Activated CD4-positive, alpha-beta memory T cell treated with anti-CD3 and anti-CD28 coated beads, Interleukin-2, amount 10 ng/mL, durations not matched to agents 7 days and 5 days (primary cell): ENCODE measurements at regions of chr1 and their contacts with region 1.

Region 1: GRCh38 chr1:205591522-205592351 is 40.1 kb downstream of the ELK4 start:
- DNase-seq: peak; percentile 89
- H3K4me3 Mint-ChIP-seq: peak overlapping the region; percentile 74
- H3K27ac Mint-ChIP-seq: peak overlapping the region; percentile 64
- H3K4me1 Mint-ChIP-seq: peaks cover 44% of the 10 kb centered on the region
- H3K27me3 Mint-ChIP-seq: no peaks in the 10 kb centered on the region

Region 2: GRCh38 chr1:205610036-205610435 is 18.3 kb after region 1 on chr1:
- CTCF ChIA-PET with region 1: interaction called, 17 read pairs
- POLR2A ChIA-PET with region 1: interaction called, 6 read pairs
- DNase-seq: no peak
- H3K4me3 Mint-ChIP-seq: no peak overlapping the region
- H3K27ac Mint-ChIP-seq: no peak overlapping the region
- H3K4me1 Mint-ChIP-seq: peaks cover 32% of the 10 kb centered on the region
- H3K27me3 Mint-ChIP-seq: no peaks in the 10 kb centered on the region

Region 3: GRCh38 chr1:205637854-205638468 is 46.2 kb after region 1 on chr1:
- CTCF ChIA-PET with region 1: interaction called, 257 read pairs
- POLR2A ChIA-PET with region 1: interaction called, 165 read pairs
- DNase-seq: no peak
- H3K4me3 Mint-ChIP-seq: no peak overlapping the region
- H3K27ac Mint-ChIP-seq: no peak overlapping the region
- H3K4me1 Mint-ChIP-seq: no peaks in the 10 kb centered on the region
- H3K27me3 Mint-ChIP-seq: peaks cover 31% of the 10 kb centered on the region